Naive thymus-derived CD4-positive, alpha-beta T cell (primary cell): ENCODE measurements at regions of chr4 and their contacts with region 1.

Region 1: GRCh38 chr4:155953151-155954114 is at the start of gene CTSO:
- DNase-seq: peak; percentile 51 to 80 (median 73)
- ATAC-seq: peak; percentile 92
- H3K4me3 ChIP-seq: peak within 1 kb of the TSS; percentile 94
- H3K4me3 Mint-ChIP-seq: peak within 1 kb of the TSS; percentile 90 to 99 (median 98)
- H3K27ac ChIP-seq: peak within 1 kb of the TSS; percentile 92
- H3K27ac Mint-ChIP-seq: peak within 1 kb of the TSS; percentile 97 to 100 (median 99)
- H3K4me1 ChIP-seq: peaks cover 4% of the 10 kb centered on the region in 2 donors
- H3K4me1 Mint-ChIP-seq: peaks cover 5 to 43% (median 30%) of the 10 kb centered on the region in 7 donors
- H3K27me3 ChIP-seq: no peaks in the 10 kb centered on the region
- H3K27me3 Mint-ChIP-seq: peaks cover 4 to 11% (median 8%) of the 10 kb centered on the region in 5 donors
- total RNA-seq, gene CTSO: 5.3 to 13.9 (median 12.1) TPM

Region 2: GRCh38 chr4:154807042-154807630 is 1146.3 kb before region 1 on chr4:
- CTCF ChIA-PET with region 1: no interaction called
- POLR2A ChIA-PET with region 1: no interaction called
- intact Hi-C with region 1: loop called in 1 of 2 experiments (anchors 5 kb)
- DNase-seq: peak in 1 of 9 donors; percentile 15
- ATAC-seq: peak; percentile 41
- H3K4me3 ChIP-seq: no peak overlapping the region
- H3K4me3 Mint-ChIP-seq: peak overlapping the region in 1 of 10 donors; percentile 6
- H3K27ac ChIP-seq: no peak overlapping the region
- H3K27ac Mint-ChIP-seq: no peak overlapping the region
- H3K4me1 ChIP-seq: no peaks in the 10 kb centered on the region
- H3K4me1 Mint-ChIP-seq: peaks cover 0 to 4% (median 0%) of the 10 kb centered on the region in 7 donors
- H3K27me3 ChIP-seq: no peaks in the 10 kb centered on the region
- H3K27me3 Mint-ChIP-seq: peaks cover 0 to 16% (median 7%) of the 10 kb centered on the region in 5 donors

Region 3: DNA sequence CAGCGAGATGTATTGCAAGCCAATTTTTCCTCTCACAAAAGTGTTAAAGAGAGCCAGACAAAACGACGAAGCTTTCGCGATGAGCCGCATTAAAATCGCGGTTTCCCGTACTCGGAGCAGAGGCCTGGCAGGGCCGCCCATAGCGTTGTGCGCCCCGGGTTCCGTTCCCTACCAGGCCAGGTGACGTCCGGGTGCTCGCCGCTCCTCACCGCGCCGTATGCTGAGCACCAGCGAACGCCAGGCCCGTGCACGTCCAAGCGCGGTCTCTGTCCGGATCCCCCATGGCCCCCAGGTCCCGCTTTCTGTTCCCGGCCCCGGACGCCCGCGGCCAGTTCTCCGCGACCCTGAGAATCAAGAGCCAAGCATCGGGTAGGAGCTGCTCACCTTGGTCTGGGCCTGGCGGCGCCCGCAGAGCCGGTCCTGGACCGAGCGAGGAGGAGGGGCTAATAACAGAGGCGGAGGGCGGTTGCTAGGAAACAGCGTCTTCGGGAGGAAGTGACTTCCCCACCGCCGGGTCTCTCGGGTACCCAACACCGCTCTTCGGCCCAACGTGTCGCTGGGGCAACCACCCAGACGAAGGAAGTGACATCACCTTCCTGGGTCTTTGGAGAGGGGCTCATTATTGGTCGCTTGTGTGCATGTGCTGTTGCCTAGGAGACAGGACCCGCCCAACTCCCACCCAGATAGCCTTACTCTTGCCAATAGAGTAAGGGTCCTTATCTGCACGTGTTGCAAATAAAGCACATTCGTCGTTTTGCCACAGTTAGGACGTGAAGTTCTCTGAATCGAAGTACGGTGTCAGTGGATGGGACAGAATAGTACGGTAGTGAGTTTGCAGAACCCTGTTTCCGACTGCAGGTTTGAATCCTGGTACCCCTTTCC is 576.8 kb before region 1 on chr4 and contains the start of gene MAP9:
- CTCF ChIA-PET with region 1: no interaction called
- POLR2A ChIA-PET with region 1: interaction called, 3 read pairs
- intact Hi-C with region 1: loop called (anchors 1 kb)
- DNase-seq: peak; percentile 74 to 92 (median 89)
- ATAC-seq: peak; percentile 91
- H3K4me3 ChIP-seq: peak within 1 kb of the TSS; percentile 73
- H3K4me3 Mint-ChIP-seq: peak within 1 kb of the TSS; percentile 81 to 93 (median 92)
- H3K27ac ChIP-seq: peak within 1 kb of the TSS; percentile 77
- H3K27ac Mint-ChIP-seq: peak within 1 kb of the TSS; percentile 72 to 97 (median 91)
- H3K4me1 ChIP-seq: peaks cover 8 to 11% of the 10 kb centered on the region in 2 donors
- H3K4me1 Mint-ChIP-seq: peaks cover 4 to 22% (median 18%) of the 10 kb centered on the region in 7 donors
- H3K27me3 ChIP-seq: no peaks in the 10 kb centered on the region
- H3K27me3 Mint-ChIP-seq: peaks cover 0 to 5% (median 0%) of the 10 kb centered on the region in 5 donors
- total RNA-seq, gene MAP9: 3.2 to 20.5 (median 7.0) TPM

Region 4: GRCh38 chr4:155442267-155443105 is 510.9 kb before region 1 on chr4:
- CTCF ChIA-PET with region 1: no interaction called
- POLR2A ChIA-PET with region 1: no interaction called
- intact Hi-C with region 1: loop called in 1 of 2 experiments (anchors 1 kb)
- DNase-seq: peak in 8 of 9 donors; percentile 10 to 67 (median 32)
- ATAC-seq: peak; percentile 82
- H3K4me3 ChIP-seq: no peak overlapping the region
- H3K4me3 Mint-ChIP-seq: peak overlapping the region in 3 of 10 donors; percentile 6 to 45 (median 20)
- H3K27ac ChIP-seq: no peak overlapping the region
- H3K27ac Mint-ChIP-seq: no peak overlapping the region
- H3K4me1 ChIP-seq: no peaks in the 10 kb centered on the region
- H3K4me1 Mint-ChIP-seq: peaks cover 0 to 3% (median 0%) of the 10 kb centered on the region in 7 donors
- H3K27me3 ChIP-seq: no peaks in the 10 kb centered on the region
- H3K27me3 Mint-ChIP-seq: peaks cover 16 to 28% (median 22%) of the 10 kb centered on the region in 5 donors

Region 5: GRCh38 chr4:155515444-155516075 is 437.9 kb before region 1 on chr4:
- CTCF ChIA-PET with region 1: no interaction called
- POLR2A ChIA-PET with region 1: no interaction called
- intact Hi-C with region 1: no loop called
- DNase-seq: no peak
- ATAC-seq: no peak
- H3K4me3 ChIP-seq: no peak overlapping the region
- H3K4me3 Mint-ChIP-seq: no peak overlapping the region
- H3K27ac ChIP-seq: no peak overlapping the region
- H3K27ac Mint-ChIP-seq: no peak overlapping the region
- H3K4me1 ChIP-seq: no peaks in the 10 kb centered on the region
- H3K4me1 Mint-ChIP-seq: peaks cover 0 to 8% (median 0%) of the 10 kb centered on the region in 7 donors
- H3K27me3 ChIP-seq: no peaks in the 10 kb centered on the region
- H3K27me3 Mint-ChIP-seq: peaks cover 2 to 21% (median 15%) of the 10 kb centered on the region in 5 donors

Region 6: GRCh38 chr4:155639704-155640523 is 313.5 kb before region 1 on chr4:
- CTCF ChIA-PET with region 1: no interaction called
- POLR2A ChIA-PET with region 1: no interaction called
- intact Hi-C with region 1: loop called in 1 of 2 experiments (anchors 10 kb)
- DNase-seq: peak in 3 of 9 donors; percentile 0 to 14 (median 1)
- ATAC-seq: peak; percentile 29
- H3K4me3 ChIP-seq: no peak overlapping the region
- H3K4me3 Mint-ChIP-seq: peak overlapping the region in 1 of 10 donors; percentile 69
- H3K27ac ChIP-seq: no peak overlapping the region
- H3K27ac Mint-ChIP-seq: peak overlapping the region in 1 of 9 donors; percentile 36
- H3K4me1 ChIP-seq: no peaks in the 10 kb centered on the region
- H3K4me1 Mint-ChIP-seq: peaks cover 0 to 20% (median 15%) of the 10 kb centered on the region in 7 donors
- H3K27me3 ChIP-seq: no peaks in the 10 kb centered on the region
- H3K27me3 Mint-ChIP-seq: peaks cover 5 to 22% (median 12%) of the 10 kb centered on the region in 5 donors

Region 7: DNA sequence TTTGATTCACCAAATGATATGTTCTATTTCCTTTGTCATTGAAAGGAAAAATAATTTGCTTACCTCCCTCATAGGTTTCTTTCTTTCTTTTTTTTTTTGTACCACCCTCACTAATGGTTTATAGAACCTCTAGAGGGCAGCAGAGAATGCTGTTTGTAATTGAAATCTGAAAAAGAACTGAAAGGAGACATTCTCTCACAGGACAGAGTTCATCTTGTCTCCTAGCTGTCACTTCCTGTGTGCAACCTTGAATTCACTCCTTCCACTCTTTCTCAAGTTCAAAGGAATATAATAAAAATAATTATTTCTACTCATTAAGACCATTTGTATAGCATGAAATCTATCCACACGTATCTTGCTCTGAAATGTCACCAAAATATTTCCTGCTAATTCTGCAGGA is 143.6 kb before region 1 on chr4:
- CTCF ChIA-PET with region 1: interaction called, 17 read pairs
- POLR2A ChIA-PET with region 1: interaction called, 3 read pairs
- intact Hi-C with region 1: loop called (anchors 1 kb)
- DNase-seq: peak in 6 of 9 donors; percentile 24 to 66 (median 44)
- ATAC-seq: peak; percentile 86
- H3K4me3 ChIP-seq: no peak overlapping the region
- H3K4me3 Mint-ChIP-seq: no peak overlapping the region
- H3K27ac ChIP-seq: no peak overlapping the region
- H3K27ac Mint-ChIP-seq: no peak overlapping the region
- H3K4me1 ChIP-seq: no peaks in the 10 kb centered on the region
- H3K4me1 Mint-ChIP-seq: peaks cover 0 to 2% (median 0%) of the 10 kb centered on the region in 7 donors
- H3K27me3 ChIP-seq: no peaks in the 10 kb centered on the region
- H3K27me3 Mint-ChIP-seq: peaks cover 0 to 4% (median 0%) of the 10 kb centered on the region in 5 donors

Region 8: GRCh38 chr4:155984106-155984797 is 30.8 kb after region 1 on chr4:
- CTCF ChIA-PET with region 1: no interaction called
- POLR2A ChIA-PET with region 1: no interaction called
- intact Hi-C with region 1: no loop called
- DNase-seq: no peak
- ATAC-seq: no peak
- H3K4me3 ChIP-seq: no peak overlapping the region
- H3K4me3 Mint-ChIP-seq: no peak overlapping the region
- H3K27ac ChIP-seq: no peak overlapping the region
- H3K27ac Mint-ChIP-seq: no peak overlapping the region
- H3K4me1 ChIP-seq: no peaks in the 10 kb centered on the region
- H3K4me1 Mint-ChIP-seq: no peaks in the 10 kb centered on the region
- H3K27me3 ChIP-seq: no peaks in the 10 kb centered on the region
- H3K27me3 Mint-ChIP-seq: peaks cover 0 to 11% (median 3%) of the 10 kb centered on the region in 5 donors